Naive thymus-derived CD4-positive, alpha-beta T cell (primary cell): ENCODE measurements at regions of chr19 and their contacts with region 1.

Region 1: GRCh38 chr19:12806239-12807081 is at the start of gene RNASEH2A:
- DNase-seq: peak; percentile 74 to 87 (median 84)
- ATAC-seq: peak; percentile 95
- H3K4me3 ChIP-seq: peak within 1 kb of the TSS; percentile 73
- H3K4me3 Mint-ChIP-seq: peak within 1 kb of the TSS; percentile 81 to 96 (median 91)
- H3K27ac ChIP-seq: peak within 1 kb of the TSS; percentile 70
- H3K27ac Mint-ChIP-seq: peak within 1 kb of the TSS; percentile 71 to 94 (median 89)
- H3K4me1 ChIP-seq: peaks cover 18% of the 10 kb centered on the region in 2 donors
- H3K4me1 Mint-ChIP-seq: peaks cover 15 to 26% (median 21%) of the 10 kb centered on the region in 7 donors
- H3K27me3 ChIP-seq: no peaks in the 10 kb centered on the region
- H3K27me3 Mint-ChIP-seq: peaks cover 0 to 6% (median 0%) of the 10 kb centered on the region in 5 donors
- total RNA-seq, gene RNASEH2A: 1.6 to 30.9 (median 9.3) TPM

Region 2: DNA sequence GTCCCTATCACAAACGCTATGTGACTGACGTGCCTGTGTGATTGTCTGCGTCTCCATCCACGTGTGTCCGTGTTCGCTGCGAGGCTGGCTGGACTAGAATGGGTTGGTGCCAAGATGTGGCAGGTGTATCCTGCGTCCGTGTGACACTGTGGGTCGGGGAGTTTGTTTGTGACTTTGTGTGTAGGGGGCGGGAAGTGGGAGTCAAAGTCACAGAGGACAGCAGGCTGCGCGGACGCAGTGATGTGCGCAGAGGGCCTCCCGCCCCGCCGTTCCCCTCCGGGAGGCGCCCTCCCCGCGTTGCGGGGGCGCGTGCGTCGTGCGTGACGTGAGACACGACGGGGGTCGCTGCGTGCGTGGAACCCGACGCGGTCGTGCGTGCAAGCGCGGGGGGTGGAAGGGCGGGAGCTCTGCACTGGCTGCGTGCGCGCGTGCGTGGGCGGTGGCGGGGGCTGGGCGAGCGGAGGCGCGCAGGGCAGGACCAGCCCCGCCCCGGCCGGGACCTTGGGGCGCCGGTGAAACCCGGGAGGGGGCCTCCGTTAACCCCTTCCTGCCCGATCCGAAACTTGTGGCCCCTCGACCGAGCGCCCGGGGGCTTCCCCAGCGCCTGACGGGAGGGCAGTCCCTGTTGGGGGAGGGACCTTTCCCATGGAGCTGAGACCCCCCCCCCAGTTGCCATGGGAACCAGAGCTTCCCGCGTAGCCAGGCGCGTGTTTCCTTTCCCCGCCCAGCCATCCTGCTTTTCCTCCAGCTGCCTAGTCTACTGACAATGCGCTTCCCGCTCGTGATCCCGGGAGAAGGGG is 24.0 kb before region 1 on chr19:
- CTCF ChIA-PET with region 1: interaction called, 169 read pairs
- POLR2A ChIA-PET with region 1: interaction called, 31 read pairs
- intact Hi-C with region 1: no loop called
- DNase-seq: peak; percentile 93 to 99 (median 98)
- ATAC-seq: peak; percentile 81
- H3K4me3 ChIP-seq: peak overlapping the region; percentile 58
- H3K4me3 Mint-ChIP-seq: peak overlapping the region; percentile 76 to 96 (median 86)
- H3K27ac ChIP-seq: peak overlapping the region; percentile 98
- H3K27ac Mint-ChIP-seq: peak overlapping the region in 4 of 9 donors; percentile 88 to 99 (median 93)
- H3K4me1 ChIP-seq: peaks cover 33 to 58% of the 10 kb centered on the region in 2 donors
- H3K4me1 Mint-ChIP-seq: peaks cover 14 to 42% (median 33%) of the 10 kb centered on the region in 7 donors
- H3K27me3 ChIP-seq: no peaks in the 10 kb centered on the region
- H3K27me3 Mint-ChIP-seq: no peaks in the 10 kb centered on the region

Region 3: GRCh38 chr19:12838182-12838885 is 31.9 kb after region 1 on chr19 and contains the start of gene MAST1:
- CTCF ChIA-PET with region 1: no interaction called
- POLR2A ChIA-PET with region 1: no interaction called
- intact Hi-C with region 1: loop called in 1 of 2 experiments (anchors 5 kb)
- DNase-seq: peak in 7 of 9 donors; percentile 37 to 78 (median 52)
- ATAC-seq: peak; percentile 84
- H3K4me3 ChIP-seq: no peak within 1 kb of the TSS
- H3K4me3 Mint-ChIP-seq: peak within 1 kb of the TSS; percentile 58 to 79 (median 72)
- H3K27ac ChIP-seq: no peak within 1 kb of the TSS
- H3K27ac Mint-ChIP-seq: peak within 1 kb of the TSS in 3 of 9 donors; percentile 12 to 30 (median 24)
- H3K4me1 ChIP-seq: peaks cover 8 to 11% of the 10 kb centered on the region in 2 donors
- H3K4me1 Mint-ChIP-seq: peaks cover 0 to 46% (median 29%) of the 10 kb centered on the region in 7 donors
- H3K27me3 ChIP-seq: peaks cover 16 to 33% of the 10 kb centered on the region in 2 donors
- H3K27me3 Mint-ChIP-seq: peaks cover 69 to 74% (median 73%) of the 10 kb centered on the region in 5 donors
- total RNA-seq, gene MAST1: 0.51 to 0.93 (median 0.71) TPM in 4 of 5 experiments, not detected in the other